ENCODE measurements at regions of chr4 and their contacts with region 1.

Region 1: DNA sequence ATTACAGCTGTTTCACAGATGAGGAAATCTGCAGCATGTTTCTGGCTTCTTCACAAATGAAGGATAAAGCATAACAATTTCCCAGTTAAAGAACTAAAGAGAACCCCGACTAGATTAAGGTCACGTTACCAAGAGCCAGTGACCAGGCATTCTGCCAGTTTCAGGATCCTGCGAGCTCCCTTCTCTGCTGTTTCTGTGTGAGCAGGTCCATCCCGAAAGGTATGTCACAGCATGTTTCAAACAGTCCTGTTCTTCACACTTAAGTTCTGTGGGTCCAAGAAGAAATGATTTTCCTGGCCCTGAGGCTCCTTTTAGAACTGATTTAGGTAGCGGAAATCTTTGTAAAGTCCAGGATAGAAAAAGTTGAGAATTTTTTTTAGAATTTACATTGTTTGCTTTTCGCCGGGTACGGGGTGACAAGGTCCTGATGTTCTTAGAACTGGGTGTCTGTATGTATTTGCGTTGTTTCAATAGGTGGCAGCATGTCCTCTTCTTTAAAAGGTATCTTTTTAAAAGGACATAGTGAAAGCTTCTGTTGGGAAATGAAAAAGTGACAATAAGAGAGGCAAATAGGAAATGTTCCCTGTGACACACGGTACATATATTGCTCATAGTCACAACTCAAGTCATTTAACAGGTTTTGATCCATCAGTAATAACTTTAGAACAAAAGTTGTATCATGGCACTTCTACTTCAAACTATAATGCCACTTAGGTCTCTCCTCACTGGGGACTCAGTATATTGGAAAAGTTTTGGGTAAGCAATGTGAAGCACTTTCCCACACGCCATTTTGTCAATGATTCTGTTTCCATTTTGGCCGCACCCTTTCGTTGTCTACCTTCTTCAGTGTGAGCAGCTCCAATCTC is 18.4 kb downstream of the IL21 start:
- DNase-seq: no peak
- H3K4me3 ChIP-seq: no peak overlapping the region
- H3K27ac ChIP-seq: no peak overlapping the region
- H3K4me1 ChIP-seq: no peaks in the 10 kb centered on the region
- H3K27me3 ChIP-seq: no peaks in the 10 kb centered on the region
- CTCF ChIP-seq: peak; percentile 25

Region 2: DNA sequence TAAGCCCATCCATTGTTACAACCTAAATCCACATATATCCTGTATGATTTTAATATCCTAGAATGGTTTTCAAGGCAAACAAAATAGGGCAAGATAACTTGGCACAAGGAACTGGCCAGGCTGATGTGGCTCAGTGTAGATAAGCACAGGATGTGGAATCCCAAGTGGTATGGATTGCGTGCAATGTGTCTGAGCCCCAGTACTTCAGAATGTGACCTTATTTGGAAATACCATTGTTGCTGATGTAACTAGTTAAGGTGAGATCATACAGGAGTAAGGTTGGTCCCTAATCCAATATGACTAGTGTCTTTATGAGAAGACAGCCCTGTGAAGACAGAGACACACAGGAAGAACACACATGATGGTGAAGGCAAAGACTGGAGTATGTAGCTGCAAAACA is 54.1 kb before region 1 on chr4:
- intact Hi-C with region 1: no loop called
- DNase-seq: no peak
- H3K4me3 ChIP-seq: no peak overlapping the region
- H3K27ac ChIP-seq: no peak overlapping the region
- H3K4me1 ChIP-seq: no peaks in the 10 kb centered on the region
- H3K27me3 ChIP-seq: no peaks in the 10 kb centered on the region
- CTCF ChIP-seq: no peak

Region 3: GRCh38 chr4:122715221-122715620 is 112.7 kb after region 1 on chr4:
- intact Hi-C with region 1: loop called (anchors 2 kb)
- DNase-seq: no peak
- H3K4me3 ChIP-seq: no peak overlapping the region
- H3K27ac ChIP-seq: no peak overlapping the region
- H3K4me1 ChIP-seq: no peaks in the 10 kb centered on the region
- H3K27me3 ChIP-seq: no peaks in the 10 kb centered on the region
- CTCF ChIP-seq: no peak

Region 4: DNA sequence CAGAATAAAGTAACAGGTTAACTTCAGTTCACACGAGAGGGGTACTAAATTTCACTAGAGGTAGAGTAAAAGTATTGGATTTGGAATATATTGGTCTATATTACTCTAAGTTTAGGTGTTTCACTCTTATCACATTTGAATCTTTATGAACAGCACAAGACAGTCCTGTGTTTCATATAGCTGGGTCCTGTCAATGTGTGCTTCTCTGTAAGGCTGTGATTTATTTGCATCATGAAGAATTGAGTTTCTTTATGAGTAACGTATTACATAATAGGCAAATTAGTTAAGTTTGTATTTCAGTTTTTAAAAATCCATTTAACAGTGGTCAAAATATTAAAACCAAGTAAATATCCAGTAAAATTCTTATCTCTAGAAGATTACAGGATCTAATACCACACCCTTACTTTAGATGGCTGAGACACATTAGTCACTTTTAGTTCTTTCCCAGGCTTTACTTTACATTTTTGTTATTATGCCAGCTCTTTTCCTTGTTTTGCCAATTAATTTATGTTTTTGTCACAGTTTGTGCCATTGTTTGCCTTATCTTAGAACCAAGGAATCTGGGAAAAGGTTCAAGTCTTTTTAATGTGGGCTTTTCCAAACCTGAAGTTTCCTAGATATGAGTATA is 287.7 kb after region 1 on chr4:
- intact Hi-C with region 1: no loop called
- DNase-seq: no peak
- H3K4me3 ChIP-seq: no peak overlapping the region
- H3K27ac ChIP-seq: no peak overlapping the region
- H3K4me1 ChIP-seq: no peaks in the 10 kb centered on the region
- H3K27me3 ChIP-seq: no peaks in the 10 kb centered on the region
- CTCF ChIP-seq: no peak

Region 5: GRCh38 chr4:122930862-122931261 is 328.4 kb after region 1 on chr4:
- intact Hi-C with region 1: loop called (anchors 5 kb)
- DNase-seq: no peak
- H3K4me3 ChIP-seq: no peak overlapping the region
- H3K27ac ChIP-seq: no peak overlapping the region
- H3K4me1 ChIP-seq: no peaks in the 10 kb centered on the region
- H3K27me3 ChIP-seq: no peaks in the 10 kb centered on the region
- CTCF ChIP-seq: peak; percentile 56

Region 6: DNA sequence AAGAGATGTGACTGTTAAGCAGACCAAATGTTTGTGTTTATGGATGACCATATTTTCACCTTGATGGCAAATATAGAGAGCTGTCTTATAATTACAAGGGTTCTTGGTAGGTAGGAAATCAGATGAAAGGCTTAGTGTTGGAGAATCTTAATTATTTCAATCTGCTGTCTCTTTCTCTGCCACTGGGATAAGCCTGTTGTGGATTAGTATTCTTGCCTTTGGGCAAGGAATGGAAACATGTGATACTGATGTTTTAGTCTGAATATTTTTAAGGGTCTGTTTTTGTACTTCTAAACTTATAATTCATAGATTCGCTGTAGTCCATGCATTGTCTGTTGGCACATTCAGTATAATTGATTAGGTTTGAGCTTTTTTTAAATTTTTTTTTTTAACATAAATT is 343.6 kb after region 1 on chr4:
- intact Hi-C with region 1: no loop called
- DNase-seq: no peak
- H3K4me3 ChIP-seq: no peak overlapping the region
- H3K27ac ChIP-seq: no peak overlapping the region
- H3K4me1 ChIP-seq: no peaks in the 10 kb centered on the region
- H3K27me3 ChIP-seq: no peaks in the 10 kb centered on the region
- CTCF ChIP-seq: no peak